MCF 10A (cell line): ENCODE measurements at regions of chr3 and their contacts with region 1.

Region 1: DNA sequence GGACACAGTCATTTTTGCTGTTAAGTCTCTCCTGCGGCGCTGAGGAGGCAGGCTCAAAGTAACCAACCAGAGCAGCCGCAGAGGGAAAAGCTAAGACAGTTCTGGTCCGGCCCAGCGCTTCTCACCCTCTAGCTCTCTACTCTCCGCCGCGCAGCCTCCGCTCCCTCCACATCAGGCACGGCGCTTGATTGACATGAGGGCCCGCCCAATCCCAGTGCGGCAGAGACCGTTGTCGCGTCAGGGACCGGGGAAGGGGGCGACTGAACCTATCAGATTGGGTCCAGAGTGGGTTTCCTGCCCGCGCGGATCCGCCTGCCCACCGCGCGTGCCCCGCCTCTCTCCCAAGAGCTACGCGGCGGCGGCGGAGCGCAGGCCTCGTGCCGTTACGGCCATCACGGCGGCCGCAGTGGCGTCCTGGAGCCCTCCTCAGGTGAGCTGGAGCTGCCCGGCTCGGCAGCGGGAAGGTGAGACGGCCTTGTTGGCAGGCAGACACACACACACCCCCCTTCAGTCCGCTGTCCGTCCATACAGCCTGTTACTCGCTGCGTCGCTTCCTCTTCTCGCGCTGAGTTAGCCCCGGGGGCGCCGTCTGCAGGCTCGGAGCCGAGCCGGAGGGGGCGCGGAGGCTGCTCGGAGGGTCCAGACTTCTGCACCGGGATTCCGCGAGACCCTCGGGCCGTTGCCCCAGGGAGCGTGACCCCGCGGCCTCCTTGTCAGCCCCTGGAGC is at the start of gene NCK1:
- DNase-seq: peak; percentile 98
- H3K4me3 Mint-ChIP-seq: peak within 1 kb of the TSS; percentile 87
- H3K27ac Mint-ChIP-seq: peak within 1 kb of the TSS; percentile 88
- H3K4me1 Mint-ChIP-seq: peaks cover 17% of the 10 kb centered on the region
- H3K27me3 Mint-ChIP-seq: no peaks in the 10 kb centered on the region
- CTCF ChIP-seq: no peak
- total RNA-seq, gene NCK1: 50.4 and 59.4 TPM in 2 replicates

Region 2: DNA sequence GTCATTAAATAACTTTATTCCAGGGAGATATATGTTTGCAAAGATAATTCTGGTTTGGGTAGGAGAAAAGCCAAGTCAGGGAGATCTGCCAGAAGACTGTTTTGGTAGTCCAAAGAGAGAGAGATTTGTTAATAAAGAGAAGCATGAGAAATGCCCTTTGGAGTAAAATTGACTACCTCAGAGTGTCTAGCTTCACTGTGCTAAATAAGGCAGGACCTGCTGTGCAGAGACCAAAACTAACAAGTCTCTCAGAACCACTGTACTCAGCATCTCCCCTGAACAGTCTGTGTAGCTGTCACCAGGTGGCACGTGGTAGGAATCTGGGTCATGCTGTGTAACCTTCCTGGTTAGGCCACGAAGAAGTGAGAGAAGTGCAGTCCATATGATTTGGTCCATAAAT is 74.7 kb before region 1 on chr3:
- CTCF ChIA-PET with region 1: no interaction called
- POLR2A ChIA-PET with region 1: interaction called, 28 read pairs
- intact Hi-C with region 1: no loop called
- DNase-seq: peak; percentile 26
- H3K4me3 Mint-ChIP-seq: peak overlapping the region; percentile 18
- H3K27ac Mint-ChIP-seq: peak overlapping the region; percentile 97
- H3K4me1 Mint-ChIP-seq: peaks cover 14% of the 10 kb centered on the region
- H3K27me3 Mint-ChIP-seq: no peaks in the 10 kb centered on the region
- CTCF ChIP-seq: no peak

Region 3: GRCh38 chr3:136929984-136930670 is 68.1 kb after region 1 on chr3:
- CTCF ChIA-PET with region 1: no interaction called
- POLR2A ChIA-PET with region 1: interaction called, 27 read pairs
- intact Hi-C with region 1: no loop called
- DNase-seq: peak; percentile 78
- H3K4me3 Mint-ChIP-seq: peak overlapping the region; percentile 65
- H3K27ac Mint-ChIP-seq: peak overlapping the region; percentile 69
- H3K4me1 Mint-ChIP-seq: peaks cover 20% of the 10 kb centered on the region
- H3K27me3 Mint-ChIP-seq: no peaks in the 10 kb centered on the region
- CTCF ChIP-seq: no peak

Region 4: DNA sequence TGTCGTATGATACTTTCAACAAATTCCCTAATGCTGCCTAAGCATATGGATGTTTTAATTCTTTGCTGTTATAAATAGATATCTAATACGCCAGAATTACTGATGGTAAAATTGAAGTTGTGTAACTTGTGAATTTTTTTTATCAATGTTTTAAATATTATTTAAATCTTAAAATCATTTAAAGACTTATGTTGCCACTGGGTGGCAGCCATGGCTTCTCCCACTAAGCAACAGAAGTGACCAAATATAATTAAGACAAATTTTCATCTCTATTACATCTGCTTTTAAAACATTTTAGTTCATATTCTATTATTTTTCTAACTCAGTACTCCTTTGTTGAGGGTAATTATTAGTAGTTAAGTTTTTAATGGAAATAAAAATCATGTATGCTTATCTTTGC is 87.7 kb after region 1 on chr3:
- CTCF ChIA-PET with region 1: interaction called, 4 read pairs
- POLR2A ChIA-PET with region 1: interaction called, 159 read pairs
- intact Hi-C with region 1: no loop called
- DNase-seq: no peak
- H3K4me3 Mint-ChIP-seq: no peak overlapping the region
- H3K27ac Mint-ChIP-seq: no peak overlapping the region
- H3K4me1 Mint-ChIP-seq: peaks cover 42% of the 10 kb centered on the region
- H3K27me3 Mint-ChIP-seq: no peaks in the 10 kb centered on the region
- CTCF ChIP-seq: peak; percentile 12

Region 5: GRCh38 chr3:136994772-136995516 is 132.9 kb after region 1 on chr3:
- CTCF ChIA-PET with region 1: no interaction called
- POLR2A ChIA-PET with region 1: interaction called, 29 read pairs
- intact Hi-C with region 1: no loop called
- DNase-seq: peak; percentile 99
- H3K4me3 Mint-ChIP-seq: peak overlapping the region; percentile 42
- H3K27ac Mint-ChIP-seq: peak overlapping the region; percentile 94
- H3K4me1 Mint-ChIP-seq: peaks cover 61% of the 10 kb centered on the region
- H3K27me3 Mint-ChIP-seq: no peaks in the 10 kb centered on the region
- CTCF ChIP-seq: no peak